Posterior cingulate gyrus (tissue), 11 donors: ENCODE measurements at regions of chr3 and their contacts with region 1.

Region 1: GRCh38 chr3:24237971-24238767 is 256.5 kb downstream of the THRB start:
- DNase-seq: peak in 3 of 10 donors; percentile 27 to 48 (median 44)

Region 2: GRCh38 chr3:23999012-23999641 is 239.0 kb before region 1 on chr3:
- intact Hi-C with region 1: loop called (anchors 2 kb)
- DNase-seq: peak; percentile 67 to 96 (median 86)

Region 3: DNA sequence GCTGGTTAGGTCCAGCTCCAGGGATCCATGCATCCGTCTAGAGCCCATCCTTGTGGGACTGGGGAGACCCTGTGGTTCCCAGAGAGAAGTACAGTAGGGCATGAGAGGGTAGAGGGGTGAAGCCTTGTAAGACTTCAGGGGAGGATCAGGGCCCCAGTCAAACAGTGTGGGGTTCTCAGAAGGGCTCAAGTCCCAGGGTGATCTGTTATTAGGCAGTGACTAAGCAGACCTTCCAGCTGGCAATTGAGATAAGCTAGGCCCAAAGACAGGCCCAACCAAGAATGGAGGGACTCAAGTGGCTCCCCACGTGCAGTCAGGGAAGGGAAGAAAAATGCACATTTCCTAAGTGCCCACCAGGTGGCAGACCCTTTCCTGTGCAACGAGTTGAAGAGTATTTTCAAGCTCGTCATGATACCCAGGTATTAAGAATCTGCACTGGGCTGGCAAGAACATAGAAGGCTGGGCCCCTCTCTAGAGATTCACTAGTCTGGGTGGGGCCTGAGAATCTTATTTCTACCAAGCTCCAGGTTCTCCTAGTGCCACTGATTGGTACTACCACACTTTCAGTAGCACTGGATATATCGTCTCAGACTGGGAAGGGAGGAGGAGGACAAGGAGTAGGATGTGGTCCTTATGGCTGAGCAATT is 52.3 kb before region 1 on chr3:
- intact Hi-C with region 1: loop called (anchors 5 kb)
- DNase-seq: peak in 6 of 10 donors; percentile 9 to 56 (median 42)

Region 4: GRCh38 chr3:24365194-24365612 is 127.0 kb after region 1 on chr3:
- intact Hi-C with region 1: no loop called
- DNase-seq: peak in 2 of 10 donors; percentile 10 to 66

Region 5: GRCh38 chr3:24389108-24390090 is 151.2 kb after region 1 on chr3:
- intact Hi-C with region 1: no loop called
- DNase-seq: no peak

Region 6: GRCh38 chr3:24781454-24781853 is 543.3 kb after region 1 on chr3:
- intact Hi-C with region 1: no loop called
- DNase-seq: no peak